ENCODE measurements at regions of chr1 and their contacts with region 1.

Region 1: DNA sequence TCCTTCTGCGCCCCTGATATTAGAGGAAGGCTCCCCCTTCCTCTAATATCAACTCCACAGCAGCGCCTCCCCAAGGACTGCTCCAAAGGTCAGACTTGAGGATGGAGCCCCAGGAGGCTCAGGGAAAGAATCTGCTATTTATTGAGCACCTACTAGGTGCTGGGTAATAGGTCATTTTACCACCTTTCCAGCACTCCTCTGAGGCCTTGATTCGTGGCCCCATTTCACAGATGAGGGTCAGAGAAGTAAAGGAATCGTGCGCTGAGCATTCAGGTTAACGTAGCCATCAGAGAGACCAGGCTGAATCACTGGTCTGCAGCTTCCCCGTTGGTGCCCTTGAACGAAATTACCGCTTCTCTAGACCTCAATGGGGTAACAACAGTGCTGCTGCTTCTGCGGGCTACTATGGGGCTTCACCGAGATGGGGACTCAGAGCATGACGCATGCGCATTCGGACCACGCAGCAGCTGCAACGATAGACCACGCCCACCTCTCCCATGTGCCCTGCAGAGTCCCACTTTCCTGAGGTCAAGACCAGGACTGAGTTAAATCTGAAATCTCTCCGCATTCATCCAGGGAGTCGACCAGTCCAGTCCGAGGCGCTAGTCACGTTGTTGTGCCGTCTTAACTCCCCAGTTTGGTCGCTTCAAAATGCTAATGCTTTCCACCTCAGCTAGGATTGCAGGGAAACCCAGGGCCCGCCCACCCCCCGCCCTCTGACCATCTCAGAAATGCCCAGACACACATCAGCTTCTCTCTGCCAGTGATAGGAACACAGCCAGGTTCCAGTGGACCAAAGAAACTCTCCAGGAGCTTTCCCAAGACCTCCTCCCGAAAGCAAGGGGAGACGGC is 12.9 kb downstream of the CAMK2N1 start:
- DNase-seq: peak; percentile 59 to 85 (median 70)
- ATAC-seq: peak in 3 of 4 donors; percentile 57 to 72 (median 58)
- H3K4me3 ChIP-seq: no peak overlapping the region
- H3K27ac ChIP-seq: no peak overlapping the region
- H3K4me1 ChIP-seq: peaks cover 0 to 26% (median 10%) of the 10 kb centered on the region in 12 donors
- H3K27me3 ChIP-seq: peaks cover 0 to 33% (median 21%) of the 10 kb centered on the region in 9 donors
- CTCF ChIP-seq: no peak
- POLR2A ChIP-seq: no peak

Region 2: GRCh38 chr1:20376880-20377494 is 96.1 kb before region 1 on chr1:
- intact Hi-C with region 1: loop called in 1 of 10 experiments (anchors 5 kb)
- DNase-seq: peak in 3 of 5 donors; percentile 33 to 78 (median 44)
- ATAC-seq: peak; percentile 32 to 71 (median 59)
- H3K4me3 ChIP-seq: no peak overlapping the region
- H3K27ac ChIP-seq: no peak overlapping the region
- H3K4me1 ChIP-seq: no peaks in the 10 kb centered on the region
- H3K27me3 ChIP-seq: peaks cover 0 to 52% (median 8%) of the 10 kb centered on the region in 9 donors
- CTCF ChIP-seq: peak; percentile 55 to 79 (median 70)
- POLR2A ChIP-seq: no peak

Measured in heart left ventricle (tissue), 16 donors.